ENCODE measurements at regions of chr20 and their contacts with region 1.

Region 1: DNA sequence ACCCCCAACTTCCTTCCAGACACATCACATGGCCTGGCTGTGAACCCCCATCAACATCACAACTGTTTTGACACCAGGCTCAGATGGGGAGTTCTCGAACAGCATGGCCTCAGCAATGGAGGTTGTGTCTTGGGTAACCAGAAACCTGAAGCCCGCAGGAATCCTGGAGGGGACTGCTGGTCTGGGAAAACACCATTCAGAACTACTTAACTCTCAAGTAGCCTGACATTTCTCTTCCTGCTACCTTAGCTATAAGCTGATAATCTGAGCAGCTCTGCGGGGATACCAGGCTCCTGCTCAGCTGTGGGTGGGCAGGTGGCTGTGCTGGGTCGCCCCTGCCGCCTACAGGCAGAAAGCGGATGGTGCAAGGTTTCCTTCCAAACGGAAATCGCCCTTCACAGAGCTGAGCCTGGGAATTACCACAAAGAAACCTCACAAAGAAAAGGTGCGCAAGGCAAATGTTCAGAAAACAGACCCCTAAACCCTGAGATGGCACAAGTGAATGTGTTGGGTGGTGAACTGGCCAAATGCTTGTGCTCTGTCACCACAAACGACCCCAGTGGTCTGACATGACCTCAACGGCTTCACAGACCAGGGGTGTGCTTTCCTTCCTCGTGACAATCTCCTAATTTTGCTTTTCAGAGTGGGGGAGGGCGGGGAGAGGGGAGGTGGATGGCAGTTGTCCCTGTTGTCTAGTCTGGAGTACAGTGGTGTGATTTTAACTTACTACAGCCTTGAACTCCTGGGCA is 29.5 kb downstream of the SNX5 start:
- DNase-seq: peak; percentile 68 to 84
- H3K4me3 ChIP-seq: no peak overlapping the region
- H3K4me1 ChIP-seq: no peaks in the 10 kb centered on the region
- H3K27me3 ChIP-seq: no peaks in the 10 kb centered on the region

Region 2: GRCh38 chr20:17460119-17460518 is 478.9 kb before region 1 on chr20:
- in situ Hi-C with region 1: no loop called
- DNase-seq: no peak
- H3K4me3 ChIP-seq: no peak overlapping the region
- H3K4me1 ChIP-seq: no peaks in the 10 kb centered on the region
- H3K27me3 ChIP-seq: peaks cover 8% of the 10 kb centered on the region

Region 3: DNA sequence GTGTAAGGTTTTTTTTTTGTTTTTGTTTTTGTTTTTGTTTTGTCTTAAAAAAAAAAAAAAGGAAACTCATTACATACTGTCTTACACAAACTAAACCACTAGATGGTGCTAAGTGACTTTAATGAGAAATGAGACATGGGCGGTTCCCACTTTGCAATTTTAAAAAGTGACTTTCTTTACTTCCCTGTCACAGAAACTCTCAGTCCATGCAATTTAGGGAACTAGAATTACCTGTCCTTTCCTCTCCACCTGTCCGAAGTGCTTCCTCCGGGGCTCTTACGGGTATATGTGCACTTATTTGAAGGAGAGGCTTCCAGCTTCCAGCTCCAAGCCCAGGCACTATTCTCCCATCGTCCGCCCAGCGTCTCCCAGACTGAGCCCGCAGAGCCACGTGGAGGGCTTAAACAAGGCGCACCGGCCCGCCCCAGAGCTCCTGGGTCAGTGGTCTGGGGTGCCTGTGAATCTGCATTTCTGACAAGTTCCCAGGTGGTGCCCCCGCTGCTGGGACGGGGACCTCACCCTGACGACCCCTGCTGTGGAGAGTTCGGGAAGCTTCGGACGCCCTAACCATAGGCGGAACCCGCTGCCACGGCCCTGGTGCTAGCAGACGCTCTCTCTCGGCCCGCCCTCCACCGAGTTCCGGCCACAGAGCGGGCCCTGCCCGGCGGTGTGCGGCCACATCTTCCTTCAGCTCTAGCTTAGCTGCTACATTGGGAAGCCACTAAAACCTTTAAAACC is 434.0 kb before region 1 on chr20:
- in situ Hi-C with region 1: loop called (anchors 25 kb)
- DNase-seq: peak; percentile 67 to 71
- H3K4me3 ChIP-seq: peak overlapping the region; percentile 19
- H3K4me1 ChIP-seq: peaks cover 6% of the 10 kb centered on the region
- H3K27me3 ChIP-seq: no peaks in the 10 kb centered on the region

Measured in HAP-1 (cell line).